PC-3 (cell line): ENCODE measurements at regions of chr2 and their contacts with region 1.

Region 1: GRCh38 chr2:211237586-211238275 is 681.3 kb downstream of the CPS1 start:
- DNase-seq: no peak
- ATAC-seq: no peak
- H3K4me3 ChIP-seq: no peak overlapping the region
- H3K27ac ChIP-seq: no peak overlapping the region
- H3K4me1 ChIP-seq: no peaks in the 10 kb centered on the region
- H3K27me3 ChIP-seq: 0 out of 2 replicates have a peak, but pooled peaks cover 3% of the 10 kb centered on the region
- CTCF ChIP-seq: no peak

Region 2: GRCh38 chr2:211408516-211408915 is 170.8 kb after region 1 on chr2:
- CTCF ChIA-PET with region 1: no interaction called
- POLR2A ChIA-PET with region 1: no interaction called
- intact Hi-C with region 1: loop called (anchors 10 kb)
- DNase-seq: peak; percentile 92
- ATAC-seq: peak; percentile 88
- H3K4me3 ChIP-seq: peak overlapping the region; percentile 28; the same call in 1 of the 2 replicates
- H3K27ac ChIP-seq: peak overlapping the region; percentile 86
- H3K4me1 ChIP-seq: peaks cover 32% of the 10 kb centered on the region
- H3K27me3 ChIP-seq: no peaks in the 10 kb centered on the region
- CTCF ChIP-seq: no peak

Region 3: GRCh38 chr2:211435248-211435711 is 197.5 kb after region 1 on chr2:
- CTCF ChIA-PET with region 1: no interaction called
- POLR2A ChIA-PET with region 1: no interaction called
- intact Hi-C with region 1: no loop called
- DNase-seq: no peak
- ATAC-seq: no peak
- H3K4me3 ChIP-seq: no peak overlapping the region
- H3K27ac ChIP-seq: no peak overlapping the region
- H3K4me1 ChIP-seq: no peaks in the 10 kb centered on the region
- H3K27me3 ChIP-seq: peaks cover 40% of the 10 kb centered on the region
- CTCF ChIP-seq: no peak